ENCODE measurements at regions of chr3 and their contacts with region 1.

Region 1: DNA sequence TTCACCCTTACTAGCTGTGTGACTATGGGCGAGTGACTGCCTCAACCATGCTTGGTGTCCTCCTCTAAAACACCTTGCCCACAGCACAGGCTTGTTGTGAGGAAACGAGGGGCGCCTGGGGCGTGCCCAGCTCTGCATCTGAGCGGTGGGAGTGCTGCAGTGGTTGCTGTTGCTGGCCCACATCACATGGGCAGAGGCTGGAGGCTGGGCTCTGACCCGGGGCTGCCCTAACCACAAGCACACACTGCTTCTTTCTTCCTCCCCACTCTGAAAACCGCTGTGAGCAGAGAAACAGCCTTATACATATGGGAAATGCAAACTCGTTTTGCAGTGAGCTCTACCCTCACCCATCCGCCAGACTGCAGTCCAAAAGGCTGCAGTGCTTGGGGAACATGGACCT is 74.8 kb upstream of the RPL32 start:
- DNase-seq: peak in 8 of 9 experiments; percentile 32 to 86 (median 54)
- ATAC-seq: peak; percentile 80
- H3K4me3 ChIP-seq: no peak overlapping the region
- H3K4me3 Mint-ChIP-seq: peak overlapping the region; percentile 49
- H3K27ac ChIP-seq: peak overlapping the region in 1 of 2 experiments; percentile 21
- H3K27ac Mint-ChIP-seq: peak overlapping the region; percentile 37
- H3K4me1 ChIP-seq: peaks cover 31% of the 10 kb centered on the region
- H3K4me1 Mint-ChIP-seq: peaks cover 32% of the 10 kb centered on the region
- H3K27me3 ChIP-seq: no peaks in the 10 kb centered on the region
- H3K27me3 Mint-ChIP-seq: no peaks in the 10 kb centered on the region
- CTCF ChIP-seq: no peak

Region 2: DNA sequence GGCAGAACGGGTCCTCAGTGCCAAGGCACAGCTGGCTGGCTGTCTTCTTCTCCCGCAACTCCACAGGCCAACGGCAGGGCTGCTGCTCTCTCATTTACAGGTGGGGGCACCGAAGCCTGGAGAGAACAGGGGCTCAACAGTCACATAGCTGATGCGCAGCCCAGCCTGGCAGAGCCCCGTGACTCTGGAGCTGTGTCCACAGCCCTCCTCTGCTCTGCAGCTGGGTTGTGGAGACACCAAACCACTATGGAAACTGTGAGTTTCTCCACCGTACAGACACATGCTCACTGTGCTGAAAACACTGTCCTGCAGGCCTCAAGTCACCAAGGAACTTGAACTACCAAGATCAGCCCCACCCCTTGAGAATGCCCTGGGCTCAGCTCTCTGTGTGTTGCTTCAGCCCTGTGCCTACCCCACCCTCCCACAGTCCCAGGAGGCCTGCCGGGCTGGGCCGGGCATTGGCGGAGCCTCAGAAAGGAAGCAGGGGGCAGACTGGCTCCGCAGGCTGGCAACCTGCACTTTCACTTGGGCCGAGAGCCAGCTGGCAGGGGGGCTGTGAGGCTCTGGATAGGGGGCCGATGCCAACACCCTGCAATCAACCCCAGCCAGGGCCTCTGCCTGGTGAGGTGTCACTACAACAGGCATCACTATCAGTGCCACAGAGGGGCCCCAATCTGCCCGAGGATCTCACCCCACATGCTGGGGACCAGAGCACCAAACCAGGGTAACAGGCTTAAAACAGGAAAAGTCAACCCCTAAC is 38.9 kb after region 1 on chr3:
- CTCF ChIA-PET with region 1: no interaction called
- POLR2A ChIA-PET with region 1: no interaction called
- intact Hi-C with region 1: no loop called
- DNase-seq: peak in 2 of 9 experiments; percentile 22 to 42
- ATAC-seq: peak; percentile 62
- H3K4me3 ChIP-seq: no peak overlapping the region
- H3K4me3 Mint-ChIP-seq: no peak overlapping the region
- H3K27ac ChIP-seq: no peak overlapping the region
- H3K27ac Mint-ChIP-seq: no peak overlapping the region
- H3K4me1 ChIP-seq: peaks cover 29% of the 10 kb centered on the region
- H3K4me1 Mint-ChIP-seq: peaks cover 65% of the 10 kb centered on the region
- H3K27me3 ChIP-seq: no peaks in the 10 kb centered on the region
- H3K27me3 Mint-ChIP-seq: no peaks in the 10 kb centered on the region
- CTCF ChIP-seq: no peak

Region 3: DNA sequence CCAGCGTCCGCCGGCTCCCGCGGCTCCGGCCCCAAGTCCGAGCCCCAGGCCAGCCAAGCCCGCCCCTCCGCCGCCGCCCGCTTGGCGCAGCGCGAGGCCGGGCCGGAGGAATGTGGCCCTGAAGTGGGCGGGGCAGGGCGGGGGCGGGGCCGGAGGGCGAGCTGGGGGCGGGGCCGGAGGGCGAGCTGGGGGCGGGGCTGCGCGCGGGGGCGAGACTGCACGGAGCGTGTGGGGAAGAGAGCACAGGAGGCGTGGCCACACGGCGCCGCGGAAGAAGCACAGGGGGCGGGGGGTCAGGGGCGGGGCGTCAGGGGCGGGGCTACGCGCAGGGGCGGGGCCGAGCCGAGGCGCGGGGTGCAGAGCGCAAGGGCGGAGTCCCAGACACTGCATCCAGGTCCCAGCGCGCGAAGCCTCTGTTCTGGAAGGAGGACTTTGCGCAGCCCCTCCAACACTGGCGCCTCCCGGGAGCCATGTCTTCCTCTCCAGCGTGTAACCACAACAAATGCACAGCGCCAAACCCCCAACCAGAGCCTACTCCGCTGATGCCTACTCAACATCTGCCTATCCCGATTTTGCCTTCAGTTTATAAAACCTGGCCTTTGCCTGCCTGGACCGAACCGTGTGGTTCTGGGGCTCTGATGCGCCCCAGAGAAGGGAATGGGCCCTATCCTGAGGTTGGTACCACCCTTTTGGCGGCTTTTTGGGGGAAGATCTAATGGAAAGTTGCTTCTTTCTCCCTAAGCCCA is 51.6 kb after region 1 on chr3:
- CTCF ChIA-PET with region 1: no interaction called
- POLR2A ChIA-PET with region 1: no interaction called
- intact Hi-C with region 1: loop called in 1 of 2 experiments (anchors 1 kb)
- DNase-seq: peak; percentile 82 to 95 (median 89)
- ATAC-seq: peak; percentile 97
- H3K4me3 ChIP-seq: peak overlapping the region; percentile 42 to 63
- H3K4me3 Mint-ChIP-seq: peak overlapping the region; percentile 82
- H3K27ac ChIP-seq: no peak overlapping the region
- H3K27ac Mint-ChIP-seq: peak overlapping the region; percentile 69
- H3K4me1 ChIP-seq: peaks cover 59% of the 10 kb centered on the region
- H3K4me1 Mint-ChIP-seq: peaks cover 74% of the 10 kb centered on the region
- H3K27me3 ChIP-seq: no peaks in the 10 kb centered on the region
- H3K27me3 Mint-ChIP-seq: no peaks in the 10 kb centered on the region
- CTCF ChIP-seq: no peak

Region 4: GRCh38 chr3:13648060-13649001 is 732.2 kb after region 1 on chr3:
- CTCF ChIA-PET with region 1: no interaction called
- POLR2A ChIA-PET with region 1: no interaction called
- intact Hi-C with region 1: no loop called
- DNase-seq: peak; percentile 56 to 88 (median 75)
- ATAC-seq: peak; percentile 27
- H3K4me3 ChIP-seq: no peak overlapping the region
- H3K4me3 Mint-ChIP-seq: no peak overlapping the region
- H3K27ac ChIP-seq: no peak overlapping the region
- H3K27ac Mint-ChIP-seq: no peak overlapping the region
- H3K4me1 ChIP-seq: peaks cover 33% of the 10 kb centered on the region
- H3K4me1 Mint-ChIP-seq: peaks cover 39% of the 10 kb centered on the region
- H3K27me3 ChIP-seq: peaks cover 0 to 3% of the 10 kb centered on the region in 2 experiments
- H3K27me3 Mint-ChIP-seq: peaks cover 15% of the 10 kb centered on the region
- CTCF ChIP-seq: peak; percentile 94

Measured in CD8-positive, alpha-beta T cell (primary cell).